ENCODE measurements at regions of chr10 and their contacts with region 1.

Region 1: GRCh38 chr10:119859420-119860258 is 13.0 kb downstream of the MCMBP start:
- DNase-seq: peak; percentile 29
- CTCF ChIP-seq: peak; percentile 55

Region 2: DNA sequence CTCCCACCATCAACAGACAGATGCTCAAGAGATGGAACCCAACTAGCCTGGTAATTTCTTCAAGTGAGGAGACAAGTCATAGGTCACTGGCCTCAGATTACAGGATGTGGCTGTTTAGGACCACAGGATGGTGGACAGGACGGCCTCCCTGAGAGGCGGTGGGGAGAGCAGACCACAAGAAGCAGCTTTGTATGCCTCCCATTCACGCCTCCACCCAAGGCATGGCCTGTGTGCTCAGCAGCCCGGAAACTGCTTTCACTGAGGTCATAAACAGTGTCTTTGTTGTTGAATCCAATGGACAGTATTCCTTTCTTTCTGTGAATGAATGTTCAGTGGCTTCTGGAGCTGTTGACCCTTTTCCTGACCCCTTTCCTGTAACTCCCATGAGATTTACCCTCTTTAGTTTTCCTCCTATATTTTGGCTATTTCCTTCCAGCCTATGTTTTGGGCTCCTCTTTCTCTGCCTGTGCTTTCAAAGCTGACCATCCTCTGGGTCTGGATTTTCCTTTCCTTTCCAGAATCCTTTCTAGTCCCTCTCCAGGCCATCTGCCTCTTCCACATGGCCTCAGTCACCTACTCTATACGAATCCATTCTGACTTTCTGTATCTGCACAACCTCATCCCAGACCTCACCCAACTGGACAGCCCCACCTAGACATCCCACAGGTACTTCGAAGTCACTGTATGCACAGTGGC is 166.2 kb before region 1 on chr10:
- CTCF ChIA-PET with region 1: interaction called, 145 read pairs
- POLR2A ChIA-PET with region 1: interaction called, 3 read pairs
- DNase-seq: peak; percentile 69
- CTCF ChIP-seq: no peak

Region 3: DNA sequence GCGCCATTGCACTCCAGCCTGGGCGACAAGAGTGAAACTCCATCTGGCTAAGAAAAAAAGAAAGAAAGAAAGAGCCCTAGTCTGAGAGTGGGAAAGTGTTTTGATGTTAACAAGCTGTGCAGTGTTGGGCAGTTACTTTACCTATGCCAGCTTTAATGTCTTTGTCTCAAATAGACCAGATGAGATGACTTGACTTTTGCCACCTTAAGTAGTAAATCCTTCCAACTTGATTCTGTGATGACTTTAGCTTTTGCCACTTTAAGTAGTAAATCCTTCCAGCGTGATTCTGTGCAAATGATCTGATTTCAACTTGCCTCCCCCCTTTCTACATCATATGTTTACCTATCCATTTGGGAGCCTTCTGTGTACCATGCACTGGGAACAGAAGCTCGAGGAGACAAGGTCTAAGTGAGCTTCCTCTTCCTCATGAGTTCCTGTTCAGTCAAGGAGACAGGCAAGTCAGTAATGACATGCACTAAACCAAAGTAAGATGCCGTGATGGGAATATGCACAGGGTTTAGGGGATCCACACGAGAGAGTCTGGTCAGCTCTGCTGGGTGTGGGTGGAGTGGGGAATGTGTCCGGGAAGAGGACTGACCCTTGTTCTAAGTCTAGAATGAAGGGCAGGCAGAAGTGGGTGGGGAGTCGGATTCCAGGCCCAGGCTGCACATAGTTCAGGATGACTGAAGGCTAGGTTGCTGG is 116.5 kb before region 1 on chr10:
- CTCF ChIA-PET with region 1: interaction called, 113 read pairs
- POLR2A ChIA-PET with region 1: no interaction called
- DNase-seq: no peak
- CTCF ChIP-seq: no peak

Region 4: GRCh38 chr10:119761106-119761505 is 98.5 kb before region 1 on chr10:
- CTCF ChIA-PET with region 1: interaction called, 16 read pairs
- POLR2A ChIA-PET with region 1: no interaction called
- DNase-seq: no peak
- CTCF ChIP-seq: no peak

Region 5: GRCh38 chr10:119834188-119834587 is 25.5 kb before region 1 on chr10:
- CTCF ChIA-PET with region 1: interaction called, 12 read pairs
- POLR2A ChIA-PET with region 1: no interaction called
- DNase-seq: no peak
- CTCF ChIP-seq: no peak

Region 6: GRCh38 chr10:119872860-119873681 is 13.4 kb after region 1 on chr10:
- CTCF ChIA-PET with region 1: interaction called, 74 read pairs
- POLR2A ChIA-PET with region 1: no interaction called
- DNase-seq: peak; percentile 91
- CTCF ChIP-seq: no peak